Panc1 (cell line): ENCODE measurements at regions of chrX and their contacts with region 1.

Region 1: GRCh38 chrX:128848374-128848773 is 674.9 kb downstream of the SMARCA1 start:
- DNase-seq: no peak
- ATAC-seq: no peak
- H3K4me3 ChIP-seq: no peak overlapping the region
- H3K27ac ChIP-seq: no peak overlapping the region
- H3K4me1 ChIP-seq: no peaks in the 10 kb centered on the region
- H3K27me3 ChIP-seq: no peaks in the 10 kb centered on the region
- CTCF ChIP-seq: no peak

Region 2: GRCh38 chrX:127112726-127113125 is 1735.6 kb before region 1 on chrX:
- CTCF ChIA-PET with region 1: no interaction called
- POLR2A ChIA-PET with region 1: no interaction called
- in situ Hi-C with region 1: no loop called
- intact Hi-C with region 1: loop called (anchors 10 kb)
- DNase-seq: no peak
- ATAC-seq: no peak
- H3K4me3 ChIP-seq: no peak overlapping the region
- H3K27ac ChIP-seq: no peak overlapping the region
- H3K4me1 ChIP-seq: no peaks in the 10 kb centered on the region
- H3K27me3 ChIP-seq: no peaks in the 10 kb centered on the region
- CTCF ChIP-seq: no peak

Region 3: GRCh38 chrX:128504496-128504895 is 343.9 kb before region 1 on chrX:
- CTCF ChIA-PET with region 1: no interaction called
- POLR2A ChIA-PET with region 1: no interaction called
- in situ Hi-C with region 1: no loop called
- intact Hi-C with region 1: no loop called
- DNase-seq: no peak
- ATAC-seq: no peak
- H3K4me3 ChIP-seq: no peak overlapping the region
- H3K27ac ChIP-seq: no peak overlapping the region
- H3K4me1 ChIP-seq: no peaks in the 10 kb centered on the region
- H3K27me3 ChIP-seq: no peaks in the 10 kb centered on the region
- CTCF ChIP-seq: no peak

Region 4: GRCh38 chrX:128543114-128543513 is 305.3 kb before region 1 on chrX:
- CTCF ChIA-PET with region 1: no interaction called
- POLR2A ChIA-PET with region 1: no interaction called
- in situ Hi-C with region 1: no loop called
- intact Hi-C with region 1: no loop called
- DNase-seq: no peak
- ATAC-seq: no peak
- H3K4me3 ChIP-seq: no peak overlapping the region
- H3K27ac ChIP-seq: no peak overlapping the region
- H3K4me1 ChIP-seq: no peaks in the 10 kb centered on the region
- H3K27me3 ChIP-seq: no peaks in the 10 kb centered on the region
- CTCF ChIP-seq: no peak

Region 5: GRCh38 chrX:128906753-128907152 is 58.4 kb after region 1 on chrX:
- CTCF ChIA-PET with region 1: no interaction called
- POLR2A ChIA-PET with region 1: no interaction called
- in situ Hi-C with region 1: no loop called
- intact Hi-C with region 1: no loop called
- DNase-seq: no peak
- ATAC-seq: no peak
- H3K4me3 ChIP-seq: no peak overlapping the region
- H3K27ac ChIP-seq: no peak overlapping the region
- H3K4me1 ChIP-seq: no peaks in the 10 kb centered on the region
- H3K27me3 ChIP-seq: no peaks in the 10 kb centered on the region
- CTCF ChIP-seq: no peak

Region 6: GRCh38 chrX:129037381-129037780 is 189.0 kb after region 1 on chrX:
- CTCF ChIA-PET with region 1: no interaction called
- POLR2A ChIA-PET with region 1: no interaction called
- in situ Hi-C with region 1: no loop called
- intact Hi-C with region 1: no loop called
- DNase-seq: no peak
- ATAC-seq: no peak
- H3K4me3 ChIP-seq: no peak overlapping the region
- H3K27ac ChIP-seq: no peak overlapping the region
- H3K4me1 ChIP-seq: no peaks in the 10 kb centered on the region
- H3K27me3 ChIP-seq: no peaks in the 10 kb centered on the region
- CTCF ChIP-seq: no peak